ENCODE measurements at regions of chr7 and their contacts with region 1.

Region 1: DNA sequence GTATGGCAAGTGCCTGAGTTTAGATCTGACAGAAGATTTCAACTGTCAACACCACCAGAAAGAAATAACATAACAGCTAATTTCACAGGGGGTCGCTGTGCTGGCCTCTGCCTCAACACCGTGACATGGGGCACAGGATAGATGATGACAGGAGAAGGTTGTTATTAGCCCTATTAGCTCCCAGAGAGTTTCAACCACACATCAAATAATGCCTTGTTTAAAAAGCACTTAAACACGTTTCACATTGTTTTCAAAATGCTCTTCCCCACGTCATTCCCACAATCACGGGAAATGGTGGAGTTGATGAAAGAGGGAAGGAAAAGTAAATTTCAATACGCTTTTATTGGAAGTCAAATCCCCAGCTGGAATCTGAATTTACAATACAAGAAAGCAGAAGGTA is 184.7 kb downstream of the MAGI2 start:
- DNase-seq: no peak
- CTCF ChIP-seq: no peak

Region 2: GRCh38 chr7:79211724-79212123 is 57.0 kb before region 1 on chr7:
- CTCF ChIA-PET with region 1: no interaction called
- POLR2A ChIA-PET with region 1: no interaction called
- DNase-seq: no peak
- CTCF ChIP-seq: no peak

Region 3: GRCh38 chr7:79281426-79281825 is 12.7 kb after region 1 on chr7:
- CTCF ChIA-PET with region 1: interaction called, 16 read pairs
- POLR2A ChIA-PET with region 1: no interaction called
- DNase-seq: no peak
- CTCF ChIP-seq: no peak

Region 4: DNA sequence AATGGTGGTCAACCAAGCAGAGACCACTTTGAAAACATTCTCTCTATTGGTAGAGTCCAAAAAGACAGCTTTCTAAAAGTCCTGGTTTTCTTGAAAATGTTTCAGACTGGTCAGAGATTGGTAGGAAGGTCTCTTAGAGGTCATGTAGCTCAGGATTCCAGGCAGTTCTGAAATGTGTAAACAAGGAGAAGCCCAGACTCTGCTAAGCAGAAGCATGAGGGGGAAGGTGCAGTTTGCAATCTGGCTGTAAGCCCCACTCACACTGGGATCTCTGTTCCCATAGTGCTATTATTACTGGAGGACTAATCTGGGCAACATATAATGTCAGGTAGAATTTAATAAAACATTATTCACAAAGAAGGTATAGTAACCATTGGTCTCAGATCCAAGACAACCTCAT is 83.6 kb after region 1 on chr7:
- CTCF ChIA-PET with region 1: no interaction called
- POLR2A ChIA-PET with region 1: no interaction called
- DNase-seq: no peak
- CTCF ChIP-seq: no peak